ENCODE measurements at regions of chr14 and their contacts with region 1.

Region 1: GRCh38 chr14:24114536-24115450 is at the starts of genes DCAF11 and NRL:
- DNase-seq: peak; percentile 100
- H3K4me3 ChIP-seq: peak within 1 kb of the TSS; percentile 63 to 96 (median 74)
- H3K27ac ChIP-seq: peak within 1 kb of the TSS; percentile 91
- H3K4me1 ChIP-seq: peaks cover 16% of the 10 kb centered on the region
- H3K27me3 ChIP-seq: no peaks in the 10 kb centered on the region
- CTCF ChIP-seq: no peak
- total RNA-seq, gene DCAF11: 38.4 to 55.7 TPM
- total RNA-seq, gene NRL: 1.1 to 1.5 TPM

Region 2: DNA sequence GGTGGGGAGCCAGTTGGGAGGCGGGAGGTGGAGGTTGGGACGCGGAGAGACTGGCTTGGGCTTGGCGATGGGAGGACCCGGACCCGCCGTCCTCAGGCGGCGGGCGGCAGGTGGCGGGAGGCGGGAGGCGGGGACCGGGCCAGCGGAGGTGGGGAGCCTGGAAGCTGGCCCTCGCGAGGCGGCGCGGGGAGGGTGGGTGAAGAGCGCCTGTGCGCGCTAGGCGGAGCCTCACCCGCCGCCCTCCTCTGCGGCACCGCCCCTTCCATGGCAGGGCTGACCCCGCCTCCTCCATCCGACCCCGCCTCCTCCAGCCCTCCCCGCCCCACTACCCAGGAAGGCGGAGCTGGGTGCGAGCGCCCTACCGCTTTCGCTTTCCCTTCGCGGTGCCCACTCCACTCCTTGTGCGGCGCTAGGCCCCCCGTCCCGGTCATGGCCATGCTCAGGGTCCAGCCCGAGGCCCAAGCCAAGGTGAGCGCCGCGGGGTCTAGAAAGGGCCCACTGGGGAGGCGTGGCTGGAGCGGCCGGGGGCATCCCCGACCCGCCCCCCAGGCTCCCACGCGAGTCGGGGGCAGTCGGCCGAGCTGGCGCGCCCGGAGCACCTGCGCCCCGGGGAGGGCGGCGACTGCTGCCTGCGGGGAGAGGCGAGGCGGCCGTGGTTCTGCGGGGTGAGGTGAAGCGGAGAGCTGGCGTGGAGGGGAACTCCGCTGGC is 21.2 kb after region 1 on chr14 and contains the start of gene PSME1:
- CTCF ChIA-PET with region 1: interaction called, 17 read pairs
- dilution Hi-C with region 1: no loop called
- in situ Hi-C with region 1: no loop called
- intact Hi-C with region 1: loop called (anchors 1 kb)
- DNase-seq: peak; percentile 87
- H3K4me3 ChIP-seq: peak within 1 kb of the TSS; percentile 48 to 98 (median 79)
- H3K27ac ChIP-seq: peak within 1 kb of the TSS; percentile 59
- H3K4me1 ChIP-seq: peaks cover 34% of the 10 kb centered on the region
- H3K27me3 ChIP-seq: no peaks in the 10 kb centered on the region
- CTCF ChIP-seq: no peak
- total RNA-seq, gene PSME1: 35.8 to 85.1 TPM

Region 3: GRCh38 chr14:24160850-24161804 is 46.3 kb after region 1 on chr14 and contains the start of gene IRF9:
- CTCF ChIA-PET with region 1: interaction called, 6 read pairs
- dilution Hi-C with region 1: no loop called
- in situ Hi-C with region 1: no loop called
- intact Hi-C with region 1: loop called (anchors 1 kb)
- DNase-seq: peak; percentile 83
- H3K4me3 ChIP-seq: peak within 1 kb of the TSS; percentile 58 to 67 (median 58)
- H3K27ac ChIP-seq: peak within 1 kb of the TSS; percentile 46
- H3K4me1 ChIP-seq: peaks cover 9% of the 10 kb centered on the region
- H3K27me3 ChIP-seq: no peaks in the 10 kb centered on the region
- CTCF ChIP-seq: peak; percentile 93 to 98
- total RNA-seq, gene IRF9: 43.0 to 45.7 TPM

Region 4: DNA sequence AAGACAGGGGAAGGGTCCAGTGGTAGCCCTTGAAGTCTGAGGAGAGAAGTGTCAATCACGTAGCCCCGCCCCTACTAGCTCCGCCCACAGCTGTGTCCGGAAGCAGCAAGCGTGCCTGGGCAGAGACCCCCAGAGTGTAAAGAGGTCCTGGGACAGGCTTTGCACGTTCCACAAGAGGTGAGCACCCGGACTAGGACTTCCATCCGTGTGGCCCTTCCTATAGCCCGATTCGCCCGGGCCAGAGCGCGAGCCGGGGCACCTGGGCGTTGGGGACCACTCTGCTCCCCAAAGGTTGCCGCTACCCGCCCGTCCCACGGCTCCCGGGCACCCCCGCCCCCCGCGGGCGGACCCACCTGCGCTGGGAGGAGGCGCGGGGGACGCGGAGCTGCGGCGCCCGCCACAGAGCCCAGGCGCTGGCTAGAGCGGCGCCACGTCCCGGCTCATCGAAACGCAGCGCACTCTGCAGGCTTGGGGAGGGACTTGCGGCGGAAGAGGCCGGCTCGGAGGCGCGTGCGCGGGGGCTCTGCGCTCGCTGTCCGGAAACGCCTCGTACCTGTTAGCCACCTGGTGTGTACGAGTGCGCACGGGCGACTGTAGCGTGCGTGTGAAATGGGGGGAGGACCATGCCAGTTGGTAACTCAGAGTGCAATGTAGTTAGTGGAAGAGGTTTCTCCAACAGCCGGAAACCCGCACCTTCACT is 156.5 kb after region 1 on chr14 and contains the start of gene RABGGTA:
- CTCF ChIA-PET with region 1: no interaction called
- dilution Hi-C with region 1: no loop called
- in situ Hi-C with region 1: no loop called
- intact Hi-C with region 1: no loop called
- DNase-seq: peak; percentile 88
- H3K4me3 ChIP-seq: peak within 1 kb of the TSS; percentile 64 to 90 (median 70)
- H3K27ac ChIP-seq: peak within 1 kb of the TSS; percentile 84
- H3K4me1 ChIP-seq: peaks cover 29% of the 10 kb centered on the region
- H3K27me3 ChIP-seq: no peaks in the 10 kb centered on the region
- CTCF ChIP-seq: peak; percentile 55 to 81
- total RNA-seq, gene RABGGTA: 51.3 to 74.5 TPM